CD4-positive, alpha-beta memory T cell (primary cell): ENCODE measurements at regions of chr6 and their contacts with region 1.

Region 1: GRCh38 chr6:157221007-157221816 is 102.1 kb downstream of the TMEM242 start:
- DNase-seq: peak; percentile 80 to 84 (median 83)
- H3K4me3 ChIP-seq: peak overlapping the region in 1 of 2 donors; percentile 66
- H3K4me3 Mint-ChIP-seq: peak overlapping the region; percentile 83 to 96 (median 89)
- H3K27ac ChIP-seq: no peak overlapping the region
- H3K27ac Mint-ChIP-seq: peak overlapping the region; percentile 66 to 96 (median 81)
- H3K4me1 ChIP-seq: peaks cover 45% of the 10 kb centered on the region
- H3K4me1 Mint-ChIP-seq: peaks cover 24 to 43% (median 34%) of the 10 kb centered on the region in 4 donors
- H3K27me3 ChIP-seq: no peaks in the 10 kb centered on the region
- H3K27me3 Mint-ChIP-seq: no peaks in the 10 kb centered on the region

Region 2: GRCh38 chr6:157235600-157236039 is 14.4 kb after region 1 on chr6:
- CTCF ChIA-PET with region 1: interaction called, 17 read pairs
- POLR2A ChIA-PET with region 1: interaction called, 6 read pairs
- intact Hi-C with region 1: loop called (anchors 1 kb)
- DNase-seq: peak; percentile 55 to 68 (median 62)
- H3K4me3 ChIP-seq: peak overlapping the region; percentile 47 to 70
- H3K4me3 Mint-ChIP-seq: peak overlapping the region; percentile 90 to 96 (median 92)
- H3K27ac ChIP-seq: no peak overlapping the region
- H3K27ac Mint-ChIP-seq: peak overlapping the region in 6 of 7 donors; percentile 61 to 85 (median 79)
- H3K4me1 ChIP-seq: peaks cover 24% of the 10 kb centered on the region
- H3K4me1 Mint-ChIP-seq: peaks cover 17 to 38% (median 21%) of the 10 kb centered on the region in 4 donors
- H3K27me3 ChIP-seq: peaks cover 7% of the 10 kb centered on the region
- H3K27me3 Mint-ChIP-seq: peaks cover 5 to 8% of the 10 kb centered on the region in 2 donors